ENCODE measurements at regions of chr22 and their contacts with region 1.

Region 1: GRCh38 chr22:36762687-36763260 is 13.1 kb downstream of the IFT27 start:
- ATAC-seq: no peak
- H3K4me3 ChIP-seq: no peak overlapping the region
- H3K27ac ChIP-seq: no peak overlapping the region
- H3K4me1 ChIP-seq: no peaks in the 10 kb centered on the region

Region 2: DNA sequence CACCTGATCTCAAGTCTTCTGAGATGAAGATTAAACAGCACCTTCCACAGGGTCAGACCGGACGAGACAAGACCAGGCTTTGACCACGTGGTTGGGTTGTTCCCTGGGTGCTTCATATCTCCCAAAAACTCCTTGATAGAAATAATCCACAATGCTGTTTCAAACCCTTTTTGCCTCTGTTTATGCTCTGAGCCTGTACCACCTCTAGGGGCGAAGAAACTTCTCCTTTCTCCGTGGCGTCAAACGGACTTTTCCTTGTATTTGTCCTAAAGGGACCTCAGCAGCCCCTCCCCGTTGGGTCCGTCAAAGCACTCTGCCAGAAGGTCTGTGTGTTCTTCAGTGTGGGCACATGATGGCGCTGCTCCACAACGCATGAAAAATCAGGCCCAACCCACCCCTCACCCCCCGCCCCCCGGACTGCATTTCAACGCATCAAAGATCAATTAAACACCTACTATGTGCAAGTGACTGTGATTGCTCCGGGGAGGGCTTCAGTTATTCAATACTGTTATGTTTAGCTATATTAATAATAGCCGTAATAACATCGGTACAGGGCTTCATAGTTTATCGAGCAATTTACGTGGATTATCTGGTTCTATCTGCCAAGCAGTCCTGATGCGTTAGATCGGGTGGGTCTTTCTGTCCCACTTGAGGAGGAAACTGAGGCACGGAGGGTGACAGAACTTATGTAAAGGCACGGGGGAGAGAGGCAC is 216.5 kb before region 1 on chr22:
- in situ Hi-C with region 1: loop called in 3 of 9 experiments (anchors 10 to 25 kb)
- ATAC-seq: peak; percentile 3 to 87 (median 37)
- H3K4me3 ChIP-seq: no peak overlapping the region
- H3K27ac ChIP-seq: no peak overlapping the region
- H3K4me1 ChIP-seq: peaks cover 8 to 21% of the 10 kb centered on the region in 2 donors

Measured in motor neuron (in vitro differentiated cells).